Mammary epithelial cell (primary cell): ENCODE measurements at regions of chr12 and their contacts with region 1.

Region 1: DNA sequence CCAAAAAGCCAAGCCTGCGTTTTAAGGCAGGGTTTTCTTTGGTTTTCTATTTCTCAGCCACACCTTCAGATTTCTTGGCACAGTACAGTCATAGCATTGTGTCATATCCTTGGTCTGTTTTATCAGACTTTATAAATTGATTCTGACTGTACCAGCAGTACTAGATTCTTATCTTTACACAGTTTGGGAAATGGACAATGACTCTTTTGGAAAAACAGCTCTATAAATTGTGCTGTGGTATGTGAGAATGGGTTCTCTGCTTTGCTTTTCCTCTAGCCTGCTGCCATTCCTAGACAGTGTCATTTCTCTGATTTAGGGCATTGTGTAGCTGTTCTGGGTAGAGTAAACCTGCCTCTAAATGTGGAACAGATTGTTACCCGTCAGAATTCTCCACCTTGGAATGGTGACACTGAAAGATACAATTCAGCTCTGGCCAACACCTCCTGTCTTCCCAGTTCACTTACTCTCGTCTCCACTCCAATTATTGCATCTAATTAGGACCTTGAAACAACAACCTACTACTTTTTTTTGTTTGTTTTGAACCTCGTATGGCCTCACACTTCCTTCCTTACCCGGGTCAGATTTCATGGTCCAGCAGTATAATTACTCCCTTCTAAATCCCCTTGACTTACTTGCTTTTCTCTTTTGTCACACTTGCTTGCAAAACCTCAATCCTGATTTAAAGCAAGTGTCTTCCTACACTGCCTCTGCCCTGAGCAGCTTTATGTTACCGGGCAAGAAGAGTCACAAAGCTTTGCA is 226.3 kb downstream of the ERC1 start:
- DNase-seq: peak; percentile 90
- H3K4me3 ChIP-seq: no peak overlapping the region
- H3K27ac ChIP-seq: peak overlapping the region; percentile 54
- H3K4me1 ChIP-seq: peaks cover 24% of the 10 kb centered on the region
- H3K27me3 ChIP-seq: no peaks in the 10 kb centered on the region
- CTCF ChIP-seq: no peak

Region 2: GRCh38 chr12:1147821-1148220 is 69.5 kb before region 1 on chr12:
- CTCF ChIA-PET with region 1: no interaction called
- dilution Hi-C with region 1: loop called (anchors 5 kb)
- in situ Hi-C with region 1: no loop called
- intact Hi-C with region 1: no loop called
- DNase-seq: no peak
- H3K4me3 ChIP-seq: no peak overlapping the region
- H3K27ac ChIP-seq: no peak overlapping the region
- H3K4me1 ChIP-seq: no peaks in the 10 kb centered on the region
- H3K27me3 ChIP-seq: no peaks in the 10 kb centered on the region
- CTCF ChIP-seq: no peak

Region 3: DNA sequence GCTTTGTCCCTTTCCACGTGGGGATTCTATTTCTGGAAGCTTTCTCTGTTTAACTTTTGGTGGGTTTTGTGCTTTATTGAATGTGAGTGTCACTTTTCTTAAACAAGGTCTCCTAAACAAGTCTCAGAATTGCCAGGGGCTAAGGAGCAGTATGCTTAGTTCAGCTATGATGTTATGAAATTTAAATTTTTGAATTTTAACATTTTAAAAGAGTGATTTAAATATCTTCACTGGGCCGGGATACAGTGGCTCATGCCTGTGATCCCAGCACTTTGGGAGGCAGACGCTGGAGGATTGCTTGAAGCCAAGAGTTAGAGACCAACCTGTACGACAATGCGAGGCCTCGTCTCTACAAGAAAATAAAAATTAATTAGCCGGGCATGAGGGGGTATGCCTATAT is 49.9 kb after region 1 on chr12:
- CTCF ChIA-PET with region 1: no interaction called
- dilution Hi-C with region 1: loop called (anchors 5 kb)
- in situ Hi-C with region 1: no loop called
- intact Hi-C with region 1: no loop called
- DNase-seq: no peak
- H3K4me3 ChIP-seq: no peak overlapping the region
- H3K27ac ChIP-seq: no peak overlapping the region
- H3K4me1 ChIP-seq: no peaks in the 10 kb centered on the region
- H3K27me3 ChIP-seq: no peaks in the 10 kb centered on the region
- CTCF ChIP-seq: no peak